Activated CD4-positive, alpha-beta memory T cell treated with anti-CD3 and anti-CD28 coated beads for 36 hours (primary cell): ENCODE measurements at regions of chr2 and their contacts with region 1.

Region 1: DNA sequence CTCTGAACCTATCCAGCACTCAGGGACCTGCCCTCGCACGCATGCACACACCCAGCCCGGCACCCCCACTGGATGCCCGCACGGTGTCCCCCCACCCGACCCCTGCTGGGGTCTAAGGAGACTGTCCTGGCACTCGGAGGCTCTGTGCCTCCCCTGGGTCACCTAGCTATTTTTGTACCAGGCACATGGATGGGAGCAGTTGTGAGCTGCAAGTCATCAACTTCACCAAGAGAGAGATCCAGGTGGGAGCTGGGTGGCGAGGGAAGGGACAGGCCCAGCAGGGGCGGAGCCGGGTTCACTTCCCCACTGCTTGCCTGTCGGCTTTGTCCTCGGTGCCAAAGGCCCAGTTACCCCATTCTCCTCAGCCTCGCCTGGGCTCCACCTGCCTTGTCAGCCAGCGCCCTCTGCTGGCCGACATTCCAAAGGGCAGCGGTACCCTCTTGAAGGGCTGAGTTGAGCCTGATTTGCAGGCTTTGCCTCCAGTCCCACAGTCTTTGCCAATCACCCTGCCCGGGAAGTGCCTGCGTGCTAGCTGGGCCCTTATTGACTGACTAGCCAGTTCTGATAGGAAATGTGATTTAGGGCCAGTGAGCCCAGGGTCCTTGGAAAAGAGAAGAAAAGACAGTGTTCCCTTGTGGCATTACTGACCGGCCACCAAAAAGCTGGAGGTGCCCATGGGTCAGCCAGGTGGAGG is 5.8 kb downstream of the NT5DC4 start:
- DNase-seq: peak; percentile 93
- H3K4me3 Mint-ChIP-seq: no peak overlapping the region
- H3K27ac Mint-ChIP-seq: no peak overlapping the region
- H3K4me1 Mint-ChIP-seq: no peaks in the 10 kb centered on the region
- H3K27me3 Mint-ChIP-seq: no peaks in the 10 kb centered on the region

Region 2: DNA sequence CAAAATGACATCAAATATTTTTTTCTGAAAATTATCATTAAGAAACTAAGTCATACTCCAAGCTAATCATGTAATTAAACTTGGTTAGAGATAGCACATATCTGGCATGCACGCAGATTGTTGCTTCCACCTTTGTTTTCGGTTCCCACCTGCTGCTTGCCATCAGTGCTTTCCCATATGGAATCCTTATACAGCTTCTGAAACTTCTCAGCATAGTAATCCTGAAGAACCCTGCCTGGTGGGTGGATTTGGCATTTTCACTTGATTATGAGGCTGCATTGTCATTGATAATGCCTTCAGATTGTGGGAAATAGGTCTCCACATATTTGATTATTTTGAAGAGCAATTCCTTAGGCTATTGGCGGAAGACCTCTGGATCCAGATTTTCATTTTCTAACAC is 403.7 kb before region 1 on chr2:
- CTCF ChIA-PET with region 1: no interaction called
- POLR2A ChIA-PET with region 1: no interaction called
- intact Hi-C with region 1: no loop called
- DNase-seq: no peak
- H3K4me3 Mint-ChIP-seq: no peak overlapping the region
- H3K27ac Mint-ChIP-seq: no peak overlapping the region
- H3K4me1 Mint-ChIP-seq: no peaks in the 10 kb centered on the region
- H3K27me3 Mint-ChIP-seq: no peaks in the 10 kb centered on the region

Region 3: GRCh38 chr2:112547333-112547732 is 179.3 kb before region 1 on chr2:
- CTCF ChIA-PET with region 1: no interaction called
- POLR2A ChIA-PET with region 1: no interaction called
- intact Hi-C with region 1: no loop called
- DNase-seq: no peak
- H3K4me3 Mint-ChIP-seq: no peak overlapping the region
- H3K27ac Mint-ChIP-seq: no peak overlapping the region
- H3K4me1 Mint-ChIP-seq: peaks cover 14% of the 10 kb centered on the region
- H3K27me3 Mint-ChIP-seq: no peaks in the 10 kb centered on the region

Region 4: DNA sequence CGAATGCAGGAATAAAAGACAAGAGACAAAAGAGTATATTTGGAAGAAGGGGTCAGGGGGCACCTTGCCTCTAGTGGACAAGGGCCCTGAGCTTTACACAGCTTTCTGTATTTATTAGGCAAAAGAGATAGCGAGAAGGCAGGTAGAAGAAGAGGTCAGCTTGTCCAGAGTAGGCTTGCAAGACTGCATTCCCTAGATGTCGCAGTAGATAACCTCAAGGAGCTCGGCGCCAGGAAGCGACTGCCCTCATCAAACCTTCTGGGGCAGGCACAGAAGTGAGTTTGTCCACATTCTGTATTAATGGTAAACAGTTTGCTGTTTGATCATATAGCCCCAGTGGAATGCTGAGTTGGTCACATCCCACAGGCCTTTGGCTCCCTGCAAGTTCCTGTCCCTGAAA is 135.3 kb before region 1 on chr2:
- CTCF ChIA-PET with region 1: interaction called, 19 read pairs
- POLR2A ChIA-PET with region 1: no interaction called
- intact Hi-C with region 1: no loop called
- DNase-seq: no peak
- H3K4me3 Mint-ChIP-seq: no peak overlapping the region
- H3K27ac Mint-ChIP-seq: no peak overlapping the region
- H3K4me1 Mint-ChIP-seq: peaks cover 4% of the 10 kb centered on the region
- H3K27me3 Mint-ChIP-seq: no peaks in the 10 kb centered on the region

Region 5: GRCh38 chr2:112645310-112646101 is 81.1 kb before region 1 on chr2 and contains the start of gene SLC20A1:
- CTCF ChIA-PET with region 1: interaction called, 16 read pairs
- POLR2A ChIA-PET with region 1: no interaction called
- intact Hi-C with region 1: loop called (anchors 5 kb)
- DNase-seq: peak; percentile 98
- H3K4me3 Mint-ChIP-seq: peak within 1 kb of the TSS; percentile 97
- H3K27ac Mint-ChIP-seq: peak within 1 kb of the TSS; percentile 87
- H3K4me1 Mint-ChIP-seq: peaks cover 52% of the 10 kb centered on the region
- H3K27me3 Mint-ChIP-seq: no peaks in the 10 kb centered on the region
- total RNA-seq, gene SLC20A1: 88.8 to 91.3 TPM

Region 6: GRCh38 chr2:112685271-112685884 is 41.3 kb before region 1 on chr2:
- CTCF ChIA-PET with region 1: interaction called, 58 read pairs
- POLR2A ChIA-PET with region 1: no interaction called
- intact Hi-C with region 1: no loop called
- DNase-seq: no peak
- H3K4me3 Mint-ChIP-seq: no peak overlapping the region
- H3K27ac Mint-ChIP-seq: no peak overlapping the region
- H3K4me1 Mint-ChIP-seq: peaks cover 7% of the 10 kb centered on the region
- H3K27me3 Mint-ChIP-seq: no peaks in the 10 kb centered on the region

Region 7: GRCh38 chr2:112712903-112713584 is 13.6 kb before region 1 on chr2:
- CTCF ChIA-PET with region 1: interaction called, 60 read pairs
- POLR2A ChIA-PET with region 1: no interaction called
- intact Hi-C with region 1: no loop called
- DNase-seq: peak; percentile 78
- H3K4me3 Mint-ChIP-seq: no peak overlapping the region
- H3K27ac Mint-ChIP-seq: peak overlapping the region; percentile 61
- H3K4me1 Mint-ChIP-seq: peaks cover 25% of the 10 kb centered on the region
- H3K27me3 Mint-ChIP-seq: peaks cover 3% of the 10 kb centered on the region

Region 8: DNA sequence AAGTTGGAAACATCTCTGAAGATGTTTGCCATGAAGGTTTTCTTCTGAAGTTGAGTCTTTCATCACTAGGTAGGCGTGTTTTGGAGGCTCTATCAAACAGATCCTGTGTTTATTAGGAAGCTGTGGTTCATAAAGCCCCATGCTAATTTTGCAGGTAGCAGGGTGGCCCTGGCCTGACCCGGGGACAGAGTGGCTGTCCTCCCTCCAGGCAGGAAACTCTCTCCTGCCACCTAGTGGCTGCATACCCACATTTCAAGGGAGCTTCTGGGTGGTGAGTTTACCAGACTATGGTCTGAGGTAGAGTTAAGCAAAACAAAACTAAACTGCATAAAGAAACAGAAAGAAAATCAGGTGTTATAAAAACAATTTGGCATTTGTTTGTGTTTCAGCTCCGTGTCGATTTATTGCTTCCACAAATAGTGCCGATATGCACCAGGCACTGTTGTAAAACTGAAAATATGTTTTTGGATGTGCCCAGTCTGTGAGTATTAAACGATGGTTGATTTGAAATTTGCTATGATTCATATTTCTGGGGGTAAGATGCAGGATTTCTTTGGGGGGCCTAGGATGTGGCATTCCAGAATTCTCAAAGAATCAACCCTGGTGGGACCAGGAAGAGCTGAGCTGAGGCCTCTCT is 158.3 kb after region 1 on chr2:
- CTCF ChIA-PET with region 1: interaction called, 11 read pairs
- POLR2A ChIA-PET with region 1: no interaction called
- intact Hi-C with region 1: no loop called
- DNase-seq: peak; percentile 86
- H3K4me3 Mint-ChIP-seq: no peak overlapping the region
- H3K27ac Mint-ChIP-seq: peak overlapping the region; percentile 6
- H3K4me1 Mint-ChIP-seq: peaks cover 27% of the 10 kb centered on the region
- H3K27me3 Mint-ChIP-seq: no peaks in the 10 kb centered on the region